CD4-positive, alpha-beta memory T cell (primary cell): ENCODE measurements at regions of chr3 and their contacts with region 1.

Region 1: GRCh38 chr3:45043728-45044299 is 17.7 kb downstream of the CLEC3B start:
- DNase-seq: no peak
- H3K4me3 ChIP-seq: no peak overlapping the region
- H3K4me3 Mint-ChIP-seq: no peak overlapping the region
- H3K27ac ChIP-seq: no peak overlapping the region
- H3K27ac Mint-ChIP-seq: no peak overlapping the region
- H3K4me1 ChIP-seq: peaks cover 14% of the 10 kb centered on the region
- H3K4me1 Mint-ChIP-seq: peaks cover 5 to 23% (median 13%) of the 10 kb centered on the region in 4 donors
- H3K27me3 ChIP-seq: no peaks in the 10 kb centered on the region
- H3K27me3 Mint-ChIP-seq: peaks cover 2 to 7% of the 10 kb centered on the region in 2 donors

Region 2: DNA sequence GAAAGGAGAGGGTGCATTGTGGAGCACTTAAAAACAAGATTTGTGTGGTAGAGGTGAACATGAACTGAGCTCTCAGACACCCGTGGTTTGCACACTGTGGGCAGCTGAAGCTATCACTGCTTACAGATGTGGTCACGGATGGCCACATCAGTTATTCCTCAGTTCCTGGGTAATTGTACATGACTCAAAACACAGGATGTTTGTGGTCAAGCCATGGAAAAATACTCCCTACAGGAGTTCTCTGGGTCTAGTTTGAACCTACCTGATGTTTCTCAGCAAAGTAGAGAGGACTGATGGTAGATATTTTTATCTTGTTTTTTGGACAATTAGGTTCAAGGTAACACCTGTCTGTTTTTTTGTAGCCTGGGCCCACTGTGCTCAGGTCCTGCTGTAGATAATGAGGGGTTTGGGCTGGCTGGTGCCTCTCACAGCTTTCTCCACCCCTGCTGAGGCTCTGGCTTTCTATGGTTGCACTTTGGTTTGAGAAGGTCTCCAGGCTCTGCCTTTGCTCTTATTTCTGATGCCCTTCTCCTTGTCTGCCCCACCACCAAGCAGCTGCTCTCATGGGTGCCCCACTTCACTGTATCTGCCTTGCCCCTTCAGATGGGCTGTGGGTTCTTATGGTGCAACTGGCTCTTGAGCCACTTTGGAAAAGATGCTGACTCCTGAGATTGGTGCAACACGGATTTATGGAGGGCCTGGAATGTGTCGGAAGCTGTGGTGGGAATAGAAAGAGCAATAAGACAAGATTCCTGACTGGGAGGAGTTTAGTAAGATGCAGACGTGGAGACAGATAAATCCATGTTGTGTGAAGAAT is 62.2 kb after region 1 on chr3:
- CTCF ChIA-PET with region 1: interaction called, 7 read pairs
- POLR2A ChIA-PET with region 1: interaction called, 7 read pairs
- intact Hi-C with region 1: loop called (anchors 5 kb)
- DNase-seq: peak; percentile 71 to 78 (median 75)
- H3K4me3 ChIP-seq: no peak overlapping the region
- H3K4me3 Mint-ChIP-seq: peak overlapping the region; percentile 9 to 74 (median 60)
- H3K27ac ChIP-seq: no peak overlapping the region
- H3K27ac Mint-ChIP-seq: peak overlapping the region; percentile 19 to 88 (median 73)
- H3K4me1 ChIP-seq: peaks cover 70% of the 10 kb centered on the region
- H3K4me1 Mint-ChIP-seq: peaks cover 50 to 75% (median 65%) of the 10 kb centered on the region in 4 donors
- H3K27me3 ChIP-seq: peaks cover 2% of the 10 kb centered on the region
- H3K27me3 Mint-ChIP-seq: peaks cover 5% of the 10 kb centered on the region in 2 donors

Region 3: DNA sequence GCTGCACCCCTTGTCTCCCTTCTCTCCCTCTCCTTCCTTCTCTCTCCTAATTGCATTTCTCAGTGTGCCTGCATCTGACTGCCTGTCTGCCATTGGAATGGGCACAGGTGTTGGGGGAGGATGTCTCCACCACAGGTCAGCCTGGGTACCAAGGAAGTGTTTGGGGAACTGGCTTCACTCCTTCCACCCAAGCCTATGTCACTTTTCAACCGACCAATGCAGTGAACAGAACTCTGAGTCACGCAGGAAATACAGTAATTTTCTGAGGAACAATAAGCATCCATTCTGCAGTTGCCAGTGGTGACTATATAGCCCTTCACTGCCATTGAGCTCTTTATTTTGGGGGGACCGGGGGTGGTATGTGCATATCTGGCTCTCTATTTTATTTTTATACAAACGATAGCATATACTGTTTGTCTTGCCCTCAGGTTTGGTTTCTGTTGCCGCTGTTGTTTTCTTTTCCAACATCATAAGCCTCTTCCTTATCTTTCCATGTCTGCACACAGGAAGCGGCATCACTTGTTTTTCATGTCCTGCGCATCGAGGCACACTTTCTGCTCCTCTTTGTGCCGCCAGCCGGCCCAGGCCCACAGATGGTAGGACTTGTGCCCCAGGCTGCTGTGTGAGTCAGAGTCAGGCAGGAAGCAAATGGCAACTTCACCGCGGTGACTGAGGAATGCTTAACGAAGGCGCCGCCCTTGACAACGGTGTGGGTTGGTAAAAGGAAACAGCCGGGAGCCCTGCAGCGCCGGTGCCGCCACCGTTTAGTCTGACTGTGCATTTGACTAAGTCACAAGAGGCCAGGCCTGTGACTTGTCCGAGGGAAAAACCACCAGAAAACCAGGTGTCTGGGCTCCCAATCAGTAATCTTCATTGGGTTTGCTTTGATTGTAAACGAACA is 123.4 kb after region 1 on chr3:
- CTCF ChIA-PET with region 1: interaction called, 16 read pairs
- POLR2A ChIA-PET with region 1: no interaction called
- intact Hi-C with region 1: loop called (anchors 1 kb)
- DNase-seq: peak; percentile 71 to 90 (median 77)
- H3K4me3 ChIP-seq: peak overlapping the region; percentile 8 to 21
- H3K4me3 Mint-ChIP-seq: peak overlapping the region; percentile 67 to 91 (median 82)
- H3K27ac ChIP-seq: peak overlapping the region; percentile 39
- H3K27ac Mint-ChIP-seq: peak overlapping the region; percentile 78 to 99 (median 95)
- H3K4me1 ChIP-seq: peaks cover 24% of the 10 kb centered on the region
- H3K4me1 Mint-ChIP-seq: peaks cover 15 to 35% (median 22%) of the 10 kb centered on the region in 4 donors
- H3K27me3 ChIP-seq: no peaks in the 10 kb centered on the region
- H3K27me3 Mint-ChIP-seq: peaks cover 0 to 2% of the 10 kb centered on the region in 2 donors

Region 4: GRCh38 chr3:45210308-45211041 is 166.7 kb after region 1 on chr3:
- CTCF ChIA-PET with region 1: interaction called, 688 read pairs
- POLR2A ChIA-PET with region 1: interaction called, 40 read pairs
- intact Hi-C with region 1: no loop called
- DNase-seq: peak; percentile 73 to 82 (median 76)
- H3K4me3 ChIP-seq: no peak overlapping the region
- H3K4me3 Mint-ChIP-seq: peak overlapping the region in 2 of 8 donors; percentile 21 to 29
- H3K27ac ChIP-seq: no peak overlapping the region
- H3K27ac Mint-ChIP-seq: peak overlapping the region in 2 of 7 donors; percentile 6 to 77
- H3K4me1 ChIP-seq: peaks cover 22% of the 10 kb centered on the region
- H3K4me1 Mint-ChIP-seq: peaks cover 9 to 28% (median 20%) of the 10 kb centered on the region in 4 donors
- H3K27me3 ChIP-seq: peaks cover 5% of the 10 kb centered on the region
- H3K27me3 Mint-ChIP-seq: peaks cover 0 to 9% of the 10 kb centered on the region in 2 donors

Region 5: GRCh38 chr3:45499529-45499928 is 455.7 kb after region 1 on chr3:
- CTCF ChIA-PET with region 1: interaction called, 19 read pairs
- POLR2A ChIA-PET with region 1: no interaction called
- intact Hi-C with region 1: no loop called
- DNase-seq: peak in 1 of 5 donors; percentile 17
- H3K4me3 ChIP-seq: no peak overlapping the region
- H3K4me3 Mint-ChIP-seq: no peak overlapping the region
- H3K27ac ChIP-seq: no peak overlapping the region
- H3K27ac Mint-ChIP-seq: no peak overlapping the region
- H3K4me1 ChIP-seq: no peaks in the 10 kb centered on the region
- H3K4me1 Mint-ChIP-seq: peaks cover 2 to 5% (median 4%) of the 10 kb centered on the region in 4 donors
- H3K27me3 ChIP-seq: no peaks in the 10 kb centered on the region
- H3K27me3 Mint-ChIP-seq: no peaks in the 10 kb centered on the region